ENCODE measurements at regions of chr7 and their contacts with region 1.

Region 1: DNA sequence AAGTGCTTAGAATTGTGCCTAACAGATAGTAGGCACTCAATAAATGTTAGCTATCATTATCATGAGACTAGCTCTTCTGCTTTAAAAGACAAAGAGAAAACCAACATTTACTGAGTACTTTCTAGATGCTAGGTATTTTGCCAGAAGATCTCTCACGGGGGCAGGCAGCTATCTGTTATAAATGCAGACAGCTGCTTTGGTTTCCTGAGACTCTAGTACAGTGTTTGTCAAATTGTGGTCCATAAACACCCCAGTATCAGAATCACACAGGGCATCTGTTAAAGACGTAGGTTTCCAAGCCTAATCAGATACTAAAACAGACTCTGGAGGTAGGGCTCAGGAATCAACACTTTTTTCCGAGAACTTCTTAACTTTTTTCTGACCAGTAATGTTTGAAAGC is 13.9 kb downstream of the FAM133B start:
- DNase-seq: no peak
- H3K4me3 ChIP-seq: no peak overlapping the region
- H3K27ac ChIP-seq: no peak overlapping the region
- H3K4me1 ChIP-seq: no peaks in the 10 kb centered on the region
- H3K27me3 ChIP-seq: no peaks in the 10 kb centered on the region
- CTCF ChIP-seq: no peak

Region 2: DNA sequence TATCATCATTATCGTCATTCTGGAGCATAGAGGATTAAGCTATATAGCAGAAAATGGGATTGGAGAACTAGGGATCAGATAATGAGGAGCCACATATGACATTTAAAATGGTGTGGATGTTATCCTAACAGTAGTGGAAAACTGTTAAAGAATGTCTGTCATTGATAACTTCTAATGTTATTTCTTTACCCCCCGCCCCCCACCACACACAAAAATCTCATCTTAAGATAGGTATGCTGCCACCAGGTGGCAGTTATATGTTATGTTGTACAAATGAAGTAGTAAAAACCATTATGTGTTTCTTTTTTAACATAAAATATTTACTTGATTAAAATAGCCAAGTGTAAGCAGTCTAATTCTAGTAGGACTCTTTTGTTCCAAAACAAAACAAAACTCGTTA is 622.7 kb before region 1 on chr7:
- intact Hi-C with region 1: no loop called
- DNase-seq: no peak
- H3K4me3 ChIP-seq: no peak overlapping the region
- H3K27ac ChIP-seq: no peak overlapping the region
- H3K4me1 ChIP-seq: peaks cover 0 to 25% (median 6%) of the 10 kb centered on the region in 4 donors
- H3K27me3 ChIP-seq: no peaks in the 10 kb centered on the region
- CTCF ChIP-seq: no peak

Region 3: GRCh38 chr7:92489634-92490033 is 86.7 kb before region 1 on chr7:
- intact Hi-C with region 1: loop called (anchors 10 kb)
- DNase-seq: no peak
- H3K4me3 ChIP-seq: no peak overlapping the region
- H3K27ac ChIP-seq: no peak overlapping the region
- H3K4me1 ChIP-seq: no peaks in the 10 kb centered on the region
- H3K27me3 ChIP-seq: no peaks in the 10 kb centered on the region
- CTCF ChIP-seq: no peak

Measured in tibial artery (tissue), 4 donors.